ENCODE measurements at regions of chr1 and their contacts with region 1.

Region 1: DNA sequence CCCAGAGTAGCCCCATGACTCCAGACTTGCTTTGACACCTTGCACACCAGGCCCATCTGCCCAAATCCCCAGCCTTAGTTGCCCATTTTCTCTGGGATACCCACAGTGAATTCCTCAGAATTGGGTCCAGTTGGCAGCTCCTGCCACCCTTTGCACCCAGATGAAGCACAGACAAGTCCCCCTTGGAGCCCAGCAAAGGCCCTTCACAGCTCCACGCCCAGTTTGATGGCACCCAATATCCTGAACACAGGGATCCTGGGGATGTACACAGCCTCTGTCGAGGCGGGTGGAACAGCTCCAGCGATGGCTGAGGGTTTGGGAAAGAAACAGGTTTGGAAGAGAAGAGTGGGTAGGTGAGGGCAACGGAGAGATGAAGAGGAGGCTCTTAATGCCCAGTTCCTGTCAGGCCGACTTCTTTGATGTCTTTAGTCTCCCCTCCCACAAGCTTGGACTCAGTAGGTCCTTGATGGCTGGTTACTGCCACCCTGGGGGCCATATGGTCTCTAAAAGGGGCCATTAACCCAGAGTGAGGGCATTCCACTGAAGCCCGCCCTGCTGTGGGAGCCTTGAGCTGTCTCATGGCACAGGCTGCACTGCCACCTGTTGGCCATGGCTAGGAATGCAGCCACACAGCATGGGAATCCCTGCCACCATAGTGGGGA is 21.7 kb downstream of the TMEM53 start:
- DNase-seq: peak; percentile 76 to 83 (median 77)
- ATAC-seq: peak; percentile 83 to 88 (median 88)
- H3K4me3 ChIP-seq: no peak overlapping the region
- H3K27ac ChIP-seq: no peak overlapping the region
- H3K4me1 ChIP-seq: no peaks in the 10 kb centered on the region
- H3K27me3 ChIP-seq: no peaks in the 10 kb centered on the region
- CTCF ChIP-seq: peak; percentile 91 to 97 (median 94)
- POLR2A ChIP-seq: no peak

Region 2: DNA sequence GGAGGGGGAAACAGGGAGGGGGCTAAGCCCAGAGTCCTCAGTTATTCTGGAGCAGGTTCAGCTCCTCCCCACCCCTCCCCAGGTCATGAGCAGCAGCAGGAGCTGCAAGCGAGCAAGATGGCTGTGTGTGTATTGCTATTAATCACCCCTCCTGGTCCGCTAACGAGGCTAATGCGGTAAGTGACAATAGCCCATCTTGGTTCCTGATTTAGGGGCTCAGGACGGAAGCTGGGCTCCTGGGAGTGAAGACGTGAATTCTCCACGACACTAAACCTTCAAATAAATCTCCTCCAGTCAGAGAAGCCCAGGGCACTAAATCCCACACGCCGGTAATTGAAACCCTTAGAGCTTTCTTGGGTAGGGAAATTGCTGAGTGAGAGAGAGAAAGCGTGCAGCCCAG is 54.4 kb before region 1 on chr1:
- intact Hi-C with region 1: no loop called
- DNase-seq: no peak
- ATAC-seq: no peak
- H3K4me3 ChIP-seq: no peak overlapping the region
- H3K27ac ChIP-seq: no peak overlapping the region
- H3K4me1 ChIP-seq: peaks cover 0 to 3% (median 0%) of the 10 kb centered on the region in 4 donors
- H3K27me3 ChIP-seq: no peaks in the 10 kb centered on the region
- CTCF ChIP-seq: no peak
- POLR2A ChIP-seq: no peak

Region 3: GRCh38 chr1:44609768-44610526 is 42.6 kb before region 1 on chr1:
- intact Hi-C with region 1: loop called (anchors 5 kb)
- DNase-seq: no peak
- ATAC-seq: no peak
- H3K4me3 ChIP-seq: no peak overlapping the region
- H3K27ac ChIP-seq: no peak overlapping the region
- H3K4me1 ChIP-seq: no peaks in the 10 kb centered on the region
- H3K27me3 ChIP-seq: no peaks in the 10 kb centered on the region
- CTCF ChIP-seq: no peak
- POLR2A ChIP-seq: no peak

Region 4: GRCh38 chr1:44786138-44786840 is 133.7 kb after region 1 on chr1:
- intact Hi-C with region 1: no loop called
- DNase-seq: peak in 1 of 3 donors; percentile 72
- ATAC-seq: peak; percentile 75 to 92 (median 82)
- H3K4me3 ChIP-seq: peak overlapping the region; percentile 37 to 45 (median 42)
- H3K27ac ChIP-seq: no peak overlapping the region
- H3K4me1 ChIP-seq: peaks cover 0 to 20% (median 0%) of the 10 kb centered on the region in 4 donors
- H3K27me3 ChIP-seq: no peaks in the 10 kb centered on the region
- CTCF ChIP-seq: peak; percentile 80 to 96 (median 86)
- POLR2A ChIP-seq: no peak

Region 5: GRCh38 chr1:45187725-45188124 is 535.1 kb after region 1 on chr1:
- intact Hi-C with region 1: no loop called
- DNase-seq: no peak
- ATAC-seq: no peak
- H3K4me3 ChIP-seq: no peak overlapping the region
- H3K27ac ChIP-seq: no peak overlapping the region
- H3K4me1 ChIP-seq: no peaks in the 10 kb centered on the region
- H3K27me3 ChIP-seq: no peaks in the 10 kb centered on the region
- CTCF ChIP-seq: no peak
- POLR2A ChIP-seq: no peak